AG04449 (cell line): ENCODE measurements at regions of chr1 and their contacts with region 1.

Region 1: GRCh38 chr1:207797229-207797961 is 45.5 kb downstream of the CD46 start:
- DNase-seq: peak; percentile 44
- H3K4me3 ChIP-seq: no peak overlapping the region
- CTCF ChIP-seq: peak; percentile 71

Region 2: DNA sequence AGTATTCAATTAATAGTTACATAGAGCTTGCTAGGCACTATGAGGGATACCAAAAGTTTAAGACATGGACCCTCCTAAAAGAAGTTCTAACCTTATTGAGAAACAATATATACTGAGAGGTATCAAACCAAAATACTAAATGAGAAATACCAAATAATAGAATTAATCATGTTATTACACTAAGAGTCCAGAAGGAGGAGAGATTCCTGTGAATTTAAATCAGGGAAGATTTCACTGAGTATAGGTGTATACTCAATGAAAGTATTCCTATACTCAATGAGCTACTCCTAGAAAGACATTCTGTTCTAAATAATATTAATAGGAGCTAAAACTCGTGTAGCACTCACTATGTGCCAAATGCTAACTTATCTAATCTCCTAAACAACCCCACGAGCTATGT is 143.1 kb before region 1 on chr1:
- CTCF ChIA-PET with region 1: interaction called, 12 read pairs
- POLR2A ChIA-PET with region 1: no interaction called
- DNase-seq: no peak
- H3K4me3 ChIP-seq: no peak overlapping the region
- CTCF ChIP-seq: no peak

Region 3: DNA sequence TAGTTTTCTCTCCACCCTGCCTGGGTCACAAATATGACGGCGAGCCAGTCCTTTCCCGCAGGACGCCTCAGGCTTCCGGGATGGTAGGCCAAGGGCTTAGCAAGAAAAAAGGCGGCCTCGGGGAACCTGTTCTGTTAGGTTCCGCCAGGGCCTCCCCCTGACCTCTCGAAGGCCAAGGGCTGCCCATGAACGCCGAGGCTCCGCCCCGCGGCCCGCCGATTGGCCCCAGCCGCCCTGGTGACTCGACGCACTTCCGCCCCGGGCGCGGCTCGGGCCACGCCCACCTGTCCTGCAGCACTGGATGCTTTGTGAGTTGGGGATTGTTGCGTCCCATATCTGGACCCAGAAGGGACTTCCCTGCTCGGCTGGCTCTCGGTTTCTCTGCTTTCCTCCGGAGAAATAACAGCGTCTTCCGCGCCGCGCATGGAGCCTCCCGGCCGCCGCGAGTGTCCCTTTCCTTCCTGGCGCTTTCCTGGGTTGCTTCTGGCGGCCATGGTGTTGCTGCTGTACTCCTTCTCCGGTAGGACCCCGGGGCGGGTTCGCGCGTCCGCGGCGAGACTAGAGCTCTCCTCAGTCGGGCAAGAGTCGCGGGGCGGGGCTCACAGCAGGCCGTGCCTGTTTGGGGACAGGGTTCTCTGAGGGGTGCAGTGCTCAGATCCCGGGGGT is 45.5 kb before region 1 on chr1 and contains the start of gene CD46:
- CTCF ChIA-PET with region 1: interaction called, 10 read pairs
- POLR2A ChIA-PET with region 1: no interaction called
- DNase-seq: peak; percentile 29
- H3K4me3 ChIP-seq: peak within 1 kb of the TSS; percentile 84
- CTCF ChIP-seq: no peak

Region 4: DNA sequence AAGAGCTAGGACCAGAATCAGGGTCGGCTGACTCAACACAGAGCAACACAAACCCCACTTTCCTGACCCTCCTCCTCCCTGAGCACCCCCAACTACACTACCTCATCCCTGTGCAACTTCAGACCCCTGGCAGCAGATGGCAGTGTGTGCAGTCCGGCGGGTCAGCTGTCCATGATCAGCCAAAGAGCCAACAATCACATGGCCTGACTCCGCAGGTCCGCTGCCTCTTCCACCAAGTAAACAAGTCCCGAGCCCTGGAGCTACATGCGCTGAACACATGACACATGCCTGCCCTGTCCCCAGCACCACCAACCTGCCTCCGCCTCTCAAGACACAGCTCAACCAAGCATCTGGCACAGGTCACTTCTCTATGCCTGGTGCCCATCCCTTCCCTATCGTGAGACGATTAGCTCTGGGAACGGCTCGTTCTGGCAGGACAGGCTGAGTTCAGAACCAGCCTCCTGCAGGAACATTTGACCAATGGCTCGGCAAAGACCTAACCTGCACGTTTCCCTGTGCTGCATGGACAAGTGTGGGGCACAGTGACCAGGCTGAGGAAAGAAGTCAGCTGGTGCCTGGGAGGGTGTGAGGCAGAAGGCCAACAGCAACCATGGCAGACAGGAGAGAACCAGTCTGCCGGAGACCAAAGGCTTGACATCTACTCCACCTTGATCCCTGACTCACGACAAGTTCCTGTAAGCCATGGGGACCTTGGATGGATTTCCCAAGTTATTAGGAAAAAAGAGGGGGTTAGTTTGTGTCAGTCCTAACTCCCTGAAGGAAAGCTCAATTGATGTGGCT is 14.7 kb after region 1 on chr1:
- CTCF ChIA-PET with region 1: interaction called, 45 read pairs
- POLR2A ChIA-PET with region 1: no interaction called
- DNase-seq: no peak
- H3K4me3 ChIP-seq: no peak overlapping the region
- CTCF ChIP-seq: peak; percentile 24

Region 5: GRCh38 chr1:207828485-207829158 is 31.2 kb after region 1 on chr1:
- CTCF ChIA-PET with region 1: interaction called, 12 read pairs
- POLR2A ChIA-PET with region 1: no interaction called
- DNase-seq: no peak
- H3K4me3 ChIP-seq: no peak overlapping the region
- CTCF ChIP-seq: peak; percentile 77

Region 6: GRCh38 chr1:208036109-208036808 is 238.9 kb after region 1 on chr1:
- CTCF ChIA-PET with region 1: no interaction called
- POLR2A ChIA-PET with region 1: no interaction called
- DNase-seq: no peak
- H3K4me3 ChIP-seq: no peak overlapping the region
- CTCF ChIP-seq: peak; percentile 19